IMR-90 (cell line): ENCODE measurements at regions of chr6 and their contacts with region 1.

Region 1: GRCh38 chr6:127516666-127517273 is 2.4 kb downstream of the MTCL3 start:
- DNase-seq: peak; percentile 57
- ATAC-seq: peak; percentile 31
- H3K4me3 ChIP-seq: peak overlapping the region; percentile 74
- H3K27ac ChIP-seq: no peak overlapping the region
- H3K4me1 ChIP-seq: peaks cover 5% of the 10 kb centered on the region; the same call in 1 of the 2 replicates
- H3K27me3 ChIP-seq: 0 out of 2 replicates have a peak, but pooled peaks cover 3% of the 10 kb centered on the region
- CTCF ChIP-seq: peak; percentile 56
- POLR2A ChIP-seq: no peak
- RAD21 ChIP-seq: no peak

Region 2: DNA sequence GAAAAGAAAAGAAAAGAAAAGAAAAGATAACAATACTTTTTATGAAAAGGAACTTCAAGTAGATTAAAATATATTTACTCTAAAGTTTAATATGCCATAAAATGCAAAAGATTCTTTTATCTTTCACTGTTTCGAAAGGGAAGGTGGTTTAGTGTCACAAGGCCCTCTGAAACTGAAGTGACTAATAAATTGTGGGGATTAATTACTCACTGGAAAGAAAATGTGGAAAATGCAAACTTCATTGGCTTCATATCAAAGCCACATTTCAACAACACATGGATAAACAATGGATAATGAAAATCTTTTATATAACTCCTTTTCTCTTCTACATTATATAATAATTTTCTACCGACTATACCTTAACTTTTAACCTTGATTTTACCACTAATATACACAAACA is 718.8 kb before region 1 on chr6:
- CTCF ChIA-PET with region 1: no interaction called
- POLR2A ChIA-PET with region 1: no interaction called
- dilution Hi-C with region 1: no loop called
- in situ Hi-C with region 1: no loop called
- intact Hi-C with region 1: no loop called
- DNase-seq: no peak
- ATAC-seq: no peak
- H3K4me3 ChIP-seq: no peak overlapping the region
- H3K27ac ChIP-seq: no peak overlapping the region
- H3K4me1 ChIP-seq: no peaks in the 10 kb centered on the region
- H3K27me3 ChIP-seq: 0 out of 2 replicates have a peak, but pooled peaks cover 1% of the 10 kb centered on the region
- CTCF ChIP-seq: no peak
- POLR2A ChIP-seq: no peak
- RAD21 ChIP-seq: no peak

Region 3: GRCh38 chr6:127302728-127303660 is 213.8 kb before region 1 on chr6:
- CTCF ChIA-PET with region 1: interaction called, 6 read pairs
- POLR2A ChIA-PET with region 1: no interaction called
- dilution Hi-C with region 1: no loop called
- in situ Hi-C with region 1: no loop called
- intact Hi-C with region 1: loop called (anchors 5 kb)
- DNase-seq: peak; percentile 48
- ATAC-seq: peak; percentile 34; the same call in 1 of the 2 replicates
- H3K4me3 ChIP-seq: no peak overlapping the region
- H3K27ac ChIP-seq: no peak overlapping the region
- H3K4me1 ChIP-seq: no peaks in the 10 kb centered on the region; the same call in none of the 2 replicates
- H3K27me3 ChIP-seq: no peaks in the 10 kb centered on the region
- CTCF ChIP-seq: peak; percentile 81
- POLR2A ChIP-seq: no peak
- RAD21 ChIP-seq: peak; percentile 69

Region 4: GRCh38 chr6:127464881-127465459 is 51.8 kb before region 1 on chr6:
- CTCF ChIA-PET with region 1: interaction called, 13 read pairs
- POLR2A ChIA-PET with region 1: interaction called, 35 read pairs
- dilution Hi-C with region 1: no loop called
- in situ Hi-C with region 1: no loop called
- intact Hi-C with region 1: loop called (anchors 2 kb)
- DNase-seq: peak; percentile 78
- ATAC-seq: peak; percentile 88
- H3K4me3 ChIP-seq: no peak overlapping the region
- H3K27ac ChIP-seq: no peak overlapping the region
- H3K4me1 ChIP-seq: peaks cover 4% of the 10 kb centered on the region; the same call in 1 of the 2 replicates
- H3K27me3 ChIP-seq: no peaks in the 10 kb centered on the region
- CTCF ChIP-seq: peak; percentile 88
- POLR2A ChIP-seq: no peak
- RAD21 ChIP-seq: peak; percentile 79

Region 5: DNA sequence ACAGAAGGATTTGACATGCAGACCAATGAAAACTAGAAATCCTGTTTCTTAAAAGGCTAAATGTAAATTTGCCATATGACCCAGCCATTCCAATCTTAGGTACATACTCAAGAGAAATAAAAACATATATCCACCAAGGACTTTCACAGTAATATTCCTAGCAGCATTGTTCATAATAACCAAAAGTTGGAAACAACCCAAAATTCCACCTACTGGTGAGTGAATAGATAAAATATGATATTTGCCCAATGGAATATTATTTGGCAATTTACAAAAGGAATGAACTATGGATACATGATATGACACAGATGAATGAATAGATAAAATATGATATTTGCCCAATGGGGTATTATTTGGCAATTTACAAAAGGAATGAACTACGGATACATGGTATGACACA is 20.3 kb before region 1 on chr6:
- CTCF ChIA-PET with region 1: interaction called, 26 read pairs
- POLR2A ChIA-PET with region 1: no interaction called
- dilution Hi-C with region 1: no loop called
- in situ Hi-C with region 1: no loop called
- intact Hi-C with region 1: no loop called
- DNase-seq: peak; percentile 25
- ATAC-seq: no peak
- H3K4me3 ChIP-seq: no peak overlapping the region
- H3K27ac ChIP-seq: no peak overlapping the region
- H3K4me1 ChIP-seq: no peaks in the 10 kb centered on the region
- H3K27me3 ChIP-seq: no peaks in the 10 kb centered on the region
- CTCF ChIP-seq: no peak
- POLR2A ChIP-seq: no peak
- RAD21 ChIP-seq: no peak

Region 6: DNA sequence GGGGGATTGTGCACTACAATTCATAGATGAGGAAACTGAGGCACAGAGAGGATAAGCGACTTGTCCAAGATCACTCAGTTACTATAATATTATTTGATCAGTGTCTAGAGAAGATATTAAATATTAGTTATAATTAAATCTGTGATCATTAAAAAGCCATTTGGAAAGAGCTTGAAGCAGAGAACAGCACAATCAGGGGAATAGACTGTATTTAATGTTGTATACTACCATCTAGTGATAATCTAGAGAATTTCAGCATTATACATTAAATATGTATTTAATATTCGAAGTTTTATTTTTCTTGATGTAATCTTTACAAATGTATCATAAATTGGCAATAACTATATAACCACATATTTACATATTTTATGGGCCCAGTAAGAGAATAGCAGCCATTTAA is 22.5 kb after region 1 on chr6:
- CTCF ChIA-PET with region 1: interaction called, 12 read pairs
- POLR2A ChIA-PET with region 1: no interaction called
- dilution Hi-C with region 1: no loop called
- in situ Hi-C with region 1: no loop called
- intact Hi-C with region 1: no loop called
- DNase-seq: peak; percentile 47
- ATAC-seq: peak; percentile 73
- H3K4me3 ChIP-seq: no peak overlapping the region
- H3K27ac ChIP-seq: no peak overlapping the region
- H3K4me1 ChIP-seq: no peaks in the 10 kb centered on the region
- H3K27me3 ChIP-seq: peaks cover 4% of the 10 kb centered on the region; the same call in 1 of the 2 replicates
- CTCF ChIP-seq: peak; percentile 58
- POLR2A ChIP-seq: no peak
- RAD21 ChIP-seq: peak; percentile 66